Heart left ventricle (tissue), 16 donors: ENCODE measurements at regions of chr3 and their contacts with region 1.

Region 1: DNA sequence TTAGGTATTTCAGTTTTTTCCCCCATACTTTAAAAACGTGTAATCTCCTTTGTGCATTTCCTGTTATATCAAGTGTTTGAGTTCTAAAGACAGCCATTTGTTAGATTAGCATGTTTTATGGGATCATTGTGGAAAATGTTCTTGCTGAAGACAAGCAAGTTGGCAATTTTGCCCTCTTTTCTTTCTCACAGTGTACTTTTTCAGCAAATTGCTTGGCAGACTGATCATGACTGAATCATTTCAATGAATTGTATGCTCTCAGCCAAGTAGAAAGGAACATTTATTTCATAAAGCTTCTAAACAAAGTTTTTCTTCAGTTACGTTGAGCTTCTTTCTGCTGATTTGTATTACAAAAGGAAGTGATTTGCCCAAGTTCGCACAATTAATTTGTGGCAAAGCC is 51.6 kb downstream of the ATG7 start:
- DNase-seq: no peak
- ATAC-seq: no peak
- H3K4me3 ChIP-seq: no peak overlapping the region
- H3K27ac ChIP-seq: no peak overlapping the region
- H3K4me1 ChIP-seq: peaks cover 0 to 5% (median 0%) of the 10 kb centered on the region in 12 donors
- H3K27me3 ChIP-seq: no peaks in the 10 kb centered on the region
- CTCF ChIP-seq: no peak
- POLR2A ChIP-seq: no peak

Region 2: DNA sequence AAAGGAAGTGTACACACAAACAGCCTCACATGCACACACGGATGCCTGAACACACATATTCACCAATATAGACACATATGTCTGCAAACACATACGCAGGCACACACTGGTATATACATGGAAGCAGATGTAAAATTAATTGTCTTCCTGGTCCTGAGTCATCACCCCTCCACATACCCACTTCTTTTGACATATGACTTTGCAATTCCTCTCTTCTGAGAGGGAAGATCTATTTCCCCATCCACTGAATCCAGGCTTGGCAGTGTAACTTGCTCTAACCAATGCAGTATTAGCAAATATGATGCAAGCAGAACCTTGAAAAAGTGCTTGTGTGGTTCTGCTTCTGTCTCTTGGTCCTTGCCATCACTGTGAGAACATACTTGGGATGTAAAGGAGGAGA is 246.3 kb before region 1 on chr3:
- intact Hi-C with region 1: loop called in 1 of 10 experiments (anchors 10 kb)
- DNase-seq: no peak
- ATAC-seq: peak in 2 of 4 donors; percentile 28 to 54
- H3K4me3 ChIP-seq: no peak overlapping the region
- H3K27ac ChIP-seq: no peak overlapping the region
- H3K4me1 ChIP-seq: peaks cover 0 to 31% (median 0%) of the 10 kb centered on the region in 12 donors
- H3K27me3 ChIP-seq: peaks cover 0 to 13% (median 0%) of the 10 kb centered on the region in 9 donors
- CTCF ChIP-seq: no peak
- POLR2A ChIP-seq: no peak

Region 3: DNA sequence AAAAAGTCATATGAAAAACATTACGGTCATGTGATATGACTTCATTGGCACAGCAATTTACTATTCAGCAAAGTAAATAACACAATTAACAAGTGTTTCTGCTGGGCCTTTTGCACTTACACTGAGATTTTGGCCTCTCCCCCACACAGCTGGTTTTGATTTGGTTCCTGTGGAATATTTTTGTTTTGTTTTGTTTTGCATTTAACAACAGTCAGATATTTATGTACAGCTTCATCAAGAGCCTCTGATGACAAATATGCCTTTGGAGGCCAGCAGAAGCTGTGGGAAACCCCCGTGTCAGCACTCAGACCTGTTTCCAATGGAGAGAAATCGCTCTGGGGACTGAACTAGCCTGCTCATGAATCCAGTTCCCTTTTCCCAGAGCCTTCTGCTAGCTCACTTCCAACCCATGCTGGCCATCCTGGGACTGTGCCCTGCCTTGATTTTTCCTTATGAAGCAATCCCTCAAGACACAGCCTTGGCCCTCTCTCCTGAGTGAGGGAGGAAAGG is 110.3 kb after region 1 on chr3:
- intact Hi-C with region 1: no loop called
- DNase-seq: peak; percentile 51 to 70 (median 57)
- ATAC-seq: peak; percentile 65 to 91 (median 84)
- H3K4me3 ChIP-seq: no peak overlapping the region
- H3K27ac ChIP-seq: peak overlapping the region; percentile 5 to 68 (median 46)
- H3K4me1 ChIP-seq: peaks cover 0 to 36% (median 16%) of the 10 kb centered on the region in 12 donors
- H3K27me3 ChIP-seq: no peaks in the 10 kb centered on the region
- CTCF ChIP-seq: no peak
- POLR2A ChIP-seq: no peak